Activated CD4-positive, alpha-beta T cell treated with anti-CD3 and anti-CD28 coated beads, Interleukin-2, amount 10 ng/mL, durations not matched to agents 24 days and 14 days (primary cell): ENCODE measurements at regions of chr11 and their contacts with region 1.

Region 1: DNA sequence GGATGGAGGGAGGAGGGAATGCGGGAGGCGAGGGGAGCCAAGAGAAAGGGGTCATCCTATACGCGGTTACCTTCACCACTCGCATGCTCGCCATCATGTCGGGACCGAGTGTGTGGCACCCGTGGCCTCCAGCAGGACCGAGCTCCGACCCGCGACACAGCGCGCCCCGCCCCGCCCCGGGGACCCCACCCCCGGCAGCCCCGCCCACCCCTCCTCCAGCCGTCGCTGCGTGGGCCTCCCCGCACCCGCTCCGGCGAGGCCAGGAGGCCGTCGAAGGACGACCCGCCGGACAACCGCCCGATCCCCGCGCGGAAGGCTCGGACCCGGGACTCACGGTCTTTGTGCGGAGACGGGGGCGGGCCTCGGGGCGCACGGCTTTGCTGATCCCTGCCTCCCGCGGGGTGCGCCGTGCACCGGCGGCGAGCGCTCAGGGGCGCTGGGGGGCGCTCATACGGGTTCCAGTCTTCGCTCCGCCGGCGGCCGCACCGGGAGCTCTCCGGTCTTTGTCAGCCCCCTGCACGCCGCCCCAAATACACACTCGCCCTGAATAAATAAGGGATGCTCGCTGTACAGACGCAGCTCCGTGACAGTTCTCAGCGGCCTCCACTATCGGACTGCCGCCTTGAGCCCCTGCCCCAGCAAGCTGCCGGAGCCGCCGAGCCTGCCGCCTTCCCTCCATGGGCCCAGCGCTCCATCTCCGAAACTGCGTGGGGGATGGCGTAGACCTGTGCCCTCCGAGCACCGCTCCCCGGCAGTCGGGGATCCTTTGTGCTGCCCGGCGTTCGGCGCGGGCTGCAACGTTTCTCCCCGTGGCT is at the start of gene UBE2L6:
- DNase-seq: peak; percentile 89
- H3K4me3 Mint-ChIP-seq: peak within 1 kb of the TSS; percentile 99
- H3K27ac Mint-ChIP-seq: peak within 1 kb of the TSS; percentile 97
- H3K4me1 Mint-ChIP-seq: peaks cover 40% of the 10 kb centered on the region
- H3K27me3 Mint-ChIP-seq: no peaks in the 10 kb centered on the region
- total RNA-seq, gene UBE2L6: 151 and 157 TPM in 2 replicates

Region 2: DNA sequence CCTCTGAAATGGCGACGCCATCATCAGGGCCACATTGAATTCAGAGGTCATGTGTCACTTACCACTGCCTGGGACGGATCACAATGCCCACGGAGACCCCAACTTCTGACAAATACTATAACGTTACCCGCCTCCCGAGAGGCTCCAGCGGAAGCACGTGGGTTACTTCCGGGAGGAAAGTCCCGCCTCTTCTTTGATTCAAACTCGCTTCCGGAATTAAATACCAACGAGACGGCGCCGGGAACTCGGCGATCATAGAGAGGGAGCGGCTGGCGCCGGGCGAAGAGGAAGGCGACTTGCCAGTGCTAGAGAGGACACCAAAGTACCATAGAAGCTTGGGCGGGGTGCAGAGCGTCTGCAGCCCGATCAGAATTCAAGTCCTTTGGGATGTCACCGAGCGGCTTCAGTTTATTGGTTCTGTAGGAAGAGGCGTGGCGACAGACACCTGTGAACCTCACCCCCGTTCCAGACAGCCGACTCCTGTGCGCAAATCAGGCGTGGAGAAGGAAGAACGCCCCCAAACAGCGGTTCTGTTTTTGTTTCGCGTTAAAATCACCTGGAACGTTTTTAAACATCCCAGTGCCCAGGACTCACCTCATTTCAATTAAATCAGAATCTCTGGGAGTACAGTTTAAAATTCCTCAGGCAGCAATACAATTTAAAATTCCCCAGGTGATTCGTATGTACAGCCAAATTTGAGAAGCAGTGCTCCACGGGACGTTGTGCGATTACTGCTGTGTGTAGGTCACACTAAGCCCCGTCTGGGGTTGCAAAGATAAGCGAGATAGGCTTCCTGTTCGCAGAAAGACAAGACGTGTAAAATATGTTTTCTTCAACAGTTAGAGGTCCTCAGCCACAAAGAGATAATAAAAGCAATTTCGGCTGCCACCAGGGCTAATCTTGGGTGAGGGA is 36.9 kb before region 1 on chr11 and contains the start of gene TIMM10:
- intact Hi-C with region 1: loop called (anchors 1 kb)
- DNase-seq: peak; percentile 98
- H3K4me3 Mint-ChIP-seq: peak within 1 kb of the TSS; percentile 89
- H3K27ac Mint-ChIP-seq: peak within 1 kb of the TSS; percentile 85
- H3K4me1 Mint-ChIP-seq: peaks cover 32% of the 10 kb centered on the region
- H3K27me3 Mint-ChIP-seq: no peaks in the 10 kb centered on the region
- total RNA-seq, gene TIMM10: 108 and 112 TPM in 2 replicates

Region 3: DNA sequence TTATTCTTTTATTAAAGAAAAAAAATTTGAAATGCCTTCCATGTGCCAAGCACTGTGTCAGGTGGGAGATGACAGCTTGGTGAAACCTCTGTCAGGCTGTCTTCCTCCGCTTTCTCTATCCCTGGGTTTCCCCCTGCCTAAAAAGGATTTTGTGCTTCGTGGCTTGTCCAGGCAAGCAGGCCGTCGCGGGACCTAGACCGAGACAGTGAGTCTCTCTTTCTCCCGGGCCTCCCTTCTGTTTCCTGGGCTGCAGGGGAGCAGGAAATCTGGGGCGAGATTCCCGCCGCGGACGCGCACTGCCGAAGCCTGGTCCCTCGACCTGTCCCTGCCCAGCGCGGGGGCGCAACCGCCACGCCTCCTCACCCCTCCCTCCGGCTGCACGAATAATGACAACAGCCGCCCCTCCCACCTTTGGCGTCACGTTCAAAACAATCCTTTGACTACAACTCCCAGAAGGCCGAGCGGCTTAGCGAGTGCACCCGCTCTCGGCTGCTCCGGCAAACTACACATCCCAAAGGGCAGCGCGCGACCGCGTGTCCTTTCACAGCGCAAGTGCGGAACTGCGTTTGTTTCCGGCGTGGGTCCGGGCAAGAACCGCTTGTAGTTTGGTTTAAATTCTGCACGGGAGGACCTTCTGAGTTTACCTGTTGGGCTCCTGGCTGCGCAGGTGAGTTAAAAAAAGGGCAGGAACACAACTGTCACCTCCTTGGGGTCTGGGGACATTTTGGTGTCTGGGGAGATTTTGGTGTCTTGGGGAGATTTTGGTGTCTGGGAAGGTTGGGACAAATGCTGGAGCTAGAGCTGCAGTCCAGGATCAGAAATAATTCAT is 89.7 kb after region 1 on chr11 and contains the start of gene CLP1:
- intact Hi-C with region 1: loop called (anchors 1 kb)
- DNase-seq: peak; percentile 100
- H3K4me3 Mint-ChIP-seq: peak within 1 kb of the TSS; percentile 86
- H3K27ac Mint-ChIP-seq: peak within 1 kb of the TSS; percentile 88
- H3K4me1 Mint-ChIP-seq: peaks cover 18% of the 10 kb centered on the region
- H3K27me3 Mint-ChIP-seq: no peaks in the 10 kb centered on the region
- total RNA-seq, gene CLP1: 18.5 and 19.8 TPM in 2 replicates

Region 4: DNA sequence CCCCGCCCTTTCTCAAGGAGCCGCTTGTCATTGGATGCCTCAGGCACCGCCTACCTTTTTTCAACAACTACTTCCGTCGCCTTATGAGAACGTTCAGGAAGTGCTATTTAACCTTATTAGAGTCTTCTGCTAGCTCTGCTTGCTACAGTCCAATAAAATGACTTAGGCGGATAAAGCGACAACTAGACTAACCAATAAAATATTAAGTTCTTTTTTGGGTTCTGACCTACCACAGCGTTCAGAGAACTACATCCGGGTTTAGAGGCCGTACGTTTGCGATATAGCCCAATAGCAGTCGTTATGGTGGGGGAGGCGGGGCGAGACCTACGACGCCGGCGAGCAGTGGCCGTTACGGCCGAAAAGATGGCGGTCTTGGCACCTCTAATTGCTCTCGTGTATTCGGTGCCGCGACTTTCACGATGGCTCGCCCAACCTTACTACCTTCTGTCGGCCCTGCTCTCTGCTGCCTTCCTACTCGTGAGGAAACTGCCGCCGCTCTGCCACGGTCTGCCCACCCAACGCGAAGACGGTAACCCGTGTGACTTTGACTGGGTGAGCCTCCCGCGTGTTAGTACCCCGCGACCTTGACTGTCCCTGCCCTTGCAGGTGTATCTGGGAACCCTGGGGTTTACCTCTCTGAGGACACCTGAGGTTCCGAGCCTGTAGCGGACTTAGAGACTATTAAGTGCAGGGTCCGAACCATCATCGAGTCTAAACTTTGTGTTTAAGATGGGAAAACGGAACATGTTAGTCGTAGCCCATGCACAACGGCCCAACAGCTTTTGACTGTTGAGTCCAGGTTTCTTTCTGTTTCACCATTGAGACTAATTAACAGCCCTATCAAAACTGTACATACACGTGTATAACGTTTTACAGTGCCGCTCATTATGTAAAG is 144.8 kb after region 1 on chr11 and contains the start of gene TMX2:
- intact Hi-C with region 1: loop called (anchors 1 kb)
- DNase-seq: peak; percentile 97
- H3K4me3 Mint-ChIP-seq: peak within 1 kb of the TSS; percentile 95
- H3K27ac Mint-ChIP-seq: peak within 1 kb of the TSS; percentile 96
- H3K4me1 Mint-ChIP-seq: peaks cover 39% of the 10 kb centered on the region
- H3K27me3 Mint-ChIP-seq: no peaks in the 10 kb centered on the region
- total RNA-seq, gene TMX2: 99.0 and 99.2 TPM in 2 replicates

Region 5: GRCh38 chr11:57792060-57792541 is 224.4 kb after region 1 on chr11:
- intact Hi-C with region 1: loop called (anchors 2 kb)
- DNase-seq: peak; percentile 95
- H3K4me3 Mint-ChIP-seq: peak overlapping the region; percentile 79
- H3K27ac Mint-ChIP-seq: peak overlapping the region; percentile 93
- H3K4me1 Mint-ChIP-seq: peaks cover 41% of the 10 kb centered on the region
- H3K27me3 Mint-ChIP-seq: no peaks in the 10 kb centered on the region

Region 6: GRCh38 chr11:58524232-58525036 is 956.7 kb after region 1 on chr11:
- intact Hi-C with region 1: loop called (anchors 5 kb)
- DNase-seq: peak; percentile 84
- H3K4me3 Mint-ChIP-seq: peak overlapping the region; percentile 79
- H3K27ac Mint-ChIP-seq: peak overlapping the region; percentile 91
- H3K4me1 Mint-ChIP-seq: peaks cover 22% of the 10 kb centered on the region
- H3K27me3 Mint-ChIP-seq: no peaks in the 10 kb centered on the region